ENCODE measurements at regions of chr6 and their contacts with region 1.

Region 1: DNA sequence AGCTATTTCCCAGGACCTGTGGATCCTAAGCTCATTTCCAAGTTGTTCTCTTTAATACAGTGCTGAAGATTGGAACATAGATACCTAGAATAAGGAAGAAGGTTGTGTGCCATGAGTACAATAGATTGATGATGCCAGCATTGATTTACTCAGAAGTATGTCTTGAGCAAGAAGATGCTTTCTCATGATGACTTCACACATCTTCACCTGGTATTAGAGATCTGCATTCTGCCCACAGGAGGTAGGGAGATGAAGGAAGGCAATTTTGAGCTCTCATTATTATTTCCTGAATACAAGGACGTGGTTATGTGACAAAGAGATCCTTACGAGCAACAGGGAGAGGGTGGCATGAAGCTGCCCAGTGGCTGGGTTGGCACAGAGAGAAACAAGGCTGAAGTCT is 20.0 kb upstream of the ZNF165 start:
- DNase-seq: no peak
- ATAC-seq: no peak
- H3K4me3 ChIP-seq: no peak overlapping the region
- H3K27ac ChIP-seq: no peak overlapping the region
- H3K4me1 ChIP-seq: no peaks in the 10 kb centered on the region
- H3K27me3 ChIP-seq: peaks cover 0 to 24% (median 0%) of the 10 kb centered on the region in 9 donors
- CTCF ChIP-seq: no peak
- POLR2A ChIP-seq: no peak

Region 2: DNA sequence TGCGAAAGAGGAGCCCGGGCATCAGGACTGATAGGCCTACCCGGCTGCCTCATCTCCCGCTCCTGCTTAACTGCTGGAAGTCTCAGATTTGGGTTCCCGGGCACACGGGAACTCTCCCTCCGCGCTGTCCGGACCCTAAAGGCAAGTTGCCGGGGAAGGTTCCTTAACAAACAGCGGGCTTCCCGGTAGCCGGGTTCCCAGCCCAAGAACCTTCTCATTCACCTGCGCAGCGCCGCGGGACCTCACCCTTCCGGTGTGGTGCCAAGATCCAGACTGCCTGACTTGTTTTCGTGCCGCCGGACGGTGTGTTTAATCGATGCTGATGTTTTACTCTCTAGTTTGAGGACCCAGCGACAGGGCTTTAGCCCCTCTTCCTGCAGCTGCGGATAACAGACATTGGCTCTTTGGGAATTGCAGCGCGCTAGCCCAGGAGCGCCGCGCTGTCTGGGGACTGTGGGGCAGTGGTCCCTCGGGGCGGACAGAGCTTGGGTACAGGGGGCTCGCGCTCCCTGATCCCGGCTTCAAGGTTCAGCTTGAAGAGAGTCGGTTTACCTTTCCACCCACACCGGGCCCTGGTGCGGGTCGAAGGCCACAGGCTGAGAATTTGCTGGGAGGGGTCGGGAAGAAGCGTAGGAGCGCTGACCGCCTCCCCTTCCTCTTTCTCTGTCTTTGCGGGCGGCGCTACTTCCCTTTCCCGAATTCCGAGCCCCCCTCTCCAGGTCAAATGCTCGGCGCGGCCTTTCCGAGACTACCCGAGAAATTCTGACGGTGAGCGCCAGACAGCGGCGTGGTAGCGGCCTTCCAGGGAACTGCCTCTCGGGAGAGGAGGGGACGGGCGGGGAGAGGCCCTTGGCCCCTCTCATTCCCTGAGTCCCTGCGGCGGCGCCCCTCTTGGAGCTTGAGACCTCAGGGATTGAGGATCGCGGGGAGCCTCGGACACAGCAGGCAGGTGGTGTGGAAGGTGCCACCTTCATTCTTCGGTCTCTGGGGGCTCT is 1446.4 kb before region 1 on chr6:
- intact Hi-C with region 1: loop called in 1 of 10 experiments (anchors 10 kb)
- DNase-seq: peak in 1 of 5 donors; percentile 37
- ATAC-seq: no peak
- H3K4me3 ChIP-seq: peak overlapping the region; percentile 10 to 53 (median 44)
- H3K27ac ChIP-seq: no peak overlapping the region
- H3K4me1 ChIP-seq: peaks cover 0 to 15% (median 11%) of the 10 kb centered on the region in 12 donors
- H3K27me3 ChIP-seq: peaks cover 11 to 59% (median 37%) of the 10 kb centered on the region in 9 donors
- CTCF ChIP-seq: no peak
- POLR2A ChIP-seq: no peak